Heart left ventricle (tissue), 16 donors: ENCODE measurements at regions of chr3 and their contacts with region 1.

Region 1: DNA sequence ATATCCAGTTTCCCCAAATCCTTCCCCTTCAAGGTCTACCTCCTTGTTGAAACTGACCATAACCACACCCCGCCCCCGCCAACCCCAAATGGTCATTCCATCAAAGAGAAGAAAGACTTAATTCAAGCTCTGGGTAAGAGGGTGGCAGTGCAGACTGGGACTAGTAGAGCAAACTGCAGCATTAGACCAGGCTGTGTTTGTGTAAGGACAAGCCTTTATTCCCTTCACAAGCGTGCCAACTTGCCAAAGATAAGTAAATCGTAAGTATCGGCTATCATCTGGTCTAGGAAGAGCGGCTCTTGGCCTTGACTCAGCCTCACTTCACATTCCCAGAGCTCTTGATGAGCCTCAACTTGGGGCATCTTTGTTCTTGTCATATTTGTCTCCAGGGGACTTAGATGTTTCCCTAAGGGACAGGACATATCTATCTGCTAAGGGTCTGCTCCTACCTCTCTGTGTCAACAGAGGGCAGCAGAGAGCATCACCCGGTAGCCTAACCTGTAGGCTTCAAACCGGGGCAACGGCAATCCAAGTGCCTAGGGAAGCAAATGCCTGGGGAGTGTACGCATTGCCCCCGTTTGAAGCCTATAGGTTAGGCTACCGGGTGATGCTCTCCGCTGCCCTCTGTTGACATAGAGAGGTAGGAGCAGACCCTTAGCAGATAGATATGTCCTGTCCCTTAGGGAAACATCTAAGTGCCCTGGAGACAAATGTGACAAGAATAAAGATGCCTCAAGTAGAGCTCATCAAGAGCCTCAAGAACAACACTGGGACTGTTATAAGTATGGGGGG is 8.9 kb upstream of the MAP3K13 start:
- DNase-seq: peak in 4 of 5 donors; percentile 32 to 55 (median 44)
- ATAC-seq: peak; percentile 42 to 90 (median 82)
- H3K4me3 ChIP-seq: no peak overlapping the region
- H3K27ac ChIP-seq: no peak overlapping the region
- H3K4me1 ChIP-seq: no peaks in the 10 kb centered on the region
- H3K27me3 ChIP-seq: no peaks in the 10 kb centered on the region
- CTCF ChIP-seq: peak; percentile 46 to 67 (median 56)
- POLR2A ChIP-seq: no peak

Region 2: DNA sequence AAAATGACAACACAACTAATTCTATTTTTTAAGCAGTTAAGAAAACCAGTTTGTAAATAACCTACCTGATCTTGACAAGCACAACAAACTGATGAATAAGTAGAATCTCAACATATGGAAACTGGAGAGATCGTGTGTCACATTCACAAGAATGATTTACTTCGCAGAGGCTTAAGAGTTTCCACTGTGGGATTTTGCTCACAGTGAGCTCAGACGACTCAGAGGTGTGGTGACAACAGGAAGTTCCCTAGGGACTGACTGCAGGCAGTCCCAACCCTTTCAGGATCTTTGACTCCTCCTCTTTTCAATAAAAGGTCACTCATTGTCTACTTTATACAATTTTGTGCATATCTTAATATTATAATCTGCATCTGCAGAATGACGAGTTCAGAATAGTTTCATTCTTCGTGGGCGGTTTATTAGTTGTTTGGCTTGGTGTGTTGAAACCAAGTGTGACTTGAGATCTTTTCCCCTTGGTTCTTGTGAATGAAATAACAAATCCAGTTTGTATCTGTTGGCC is 198.4 kb after region 1 on chr3 and contains the start of gene LIPH:
- intact Hi-C with region 1: loop called in 4 of 10 experiments (anchors 5 to 10 kb)
- DNase-seq: no peak
- ATAC-seq: no peak
- H3K4me3 ChIP-seq: peak within 1 kb of the TSS in 6 of 12 donors; percentile 11 to 37 (median 32)
- H3K27ac ChIP-seq: peak within 1 kb of the TSS in 1 of 12 donors; percentile 51
- H3K4me1 ChIP-seq: peaks cover 0 to 7% (median 0%) of the 10 kb centered on the region in 12 donors
- H3K27me3 ChIP-seq: no peaks in the 10 kb centered on the region
- CTCF ChIP-seq: no peak
- POLR2A ChIP-seq: no peak
- total RNA-seq, gene LIPH: 0.09 to 1.4 (median 0.48) TPM

Region 3: GRCh38 chr3:185558395-185558794 is 204.4 kb after region 1 on chr3:
- intact Hi-C with region 1: loop called in 4 of 10 experiments (anchors 5 to 10 kb)
- DNase-seq: no peak
- ATAC-seq: no peak
- H3K4me3 ChIP-seq: no peak overlapping the region
- H3K27ac ChIP-seq: no peak overlapping the region
- H3K4me1 ChIP-seq: peaks cover 0 to 19% (median 0%) of the 10 kb centered on the region in 12 donors
- H3K27me3 ChIP-seq: peaks cover 0 to 22% (median 0%) of the 10 kb centered on the region in 9 donors
- CTCF ChIP-seq: no peak
- POLR2A ChIP-seq: no peak

Region 4: DNA sequence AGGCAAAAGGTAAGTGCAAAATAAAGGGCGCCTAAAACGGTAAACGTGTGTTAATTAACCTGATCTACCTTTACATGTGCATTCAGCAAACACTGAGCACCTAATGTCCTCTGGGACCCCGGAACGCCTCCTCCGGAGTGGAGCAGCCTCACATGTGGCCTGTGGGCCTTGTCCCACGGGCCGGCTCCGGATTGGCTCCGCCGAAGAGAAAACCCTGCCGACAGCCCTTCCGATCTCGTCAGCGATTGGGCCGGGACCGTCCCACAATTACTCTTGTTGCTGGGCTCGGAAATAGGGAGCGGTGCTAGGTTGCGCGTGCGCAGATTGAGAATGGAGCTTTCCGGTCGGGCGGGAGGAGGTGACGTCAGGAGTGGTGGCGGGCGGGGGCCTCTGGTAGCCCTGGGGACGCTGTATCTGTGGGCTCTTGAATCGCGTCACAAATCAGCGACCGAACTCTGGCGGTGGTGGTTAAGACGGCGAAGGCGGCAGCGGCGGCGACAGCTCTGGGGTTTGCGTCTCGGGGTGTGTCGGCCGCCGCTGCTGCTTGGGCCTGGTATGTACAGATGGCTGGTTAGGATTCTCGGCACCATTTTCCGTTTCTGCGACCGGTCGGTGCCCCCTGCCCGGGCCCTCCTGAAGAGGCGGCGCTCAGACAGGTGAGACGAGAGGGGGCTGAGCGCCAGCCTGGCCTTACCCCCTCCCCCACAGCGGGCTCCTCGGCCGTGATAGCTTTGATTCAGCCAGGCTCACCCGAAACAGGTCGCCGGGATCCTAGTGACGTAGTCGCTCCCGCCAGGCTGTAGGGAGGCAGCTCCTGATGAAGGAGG is 232.1 kb after region 1 on chr3 and contains the start of gene SENP2:
- intact Hi-C with region 1: no loop called
- DNase-seq: peak; percentile 99
- ATAC-seq: peak; percentile 98 to 99 (median 98)
- H3K4me3 ChIP-seq: peak within 1 kb of the TSS; percentile 64 to 99 (median 84)
- H3K27ac ChIP-seq: peak within 1 kb of the TSS; percentile 82 to 99 (median 92)
- H3K4me1 ChIP-seq: peaks cover 0 to 38% (median 24%) of the 10 kb centered on the region in 12 donors
- H3K27me3 ChIP-seq: no peaks in the 10 kb centered on the region
- CTCF ChIP-seq: no peak
- POLR2A ChIP-seq: peak; percentile 20 to 78
- total RNA-seq, gene SENP2: 19.3 to 42.4 (median 33.1) TPM

Region 5: GRCh38 chr3:185929192-185930151 is 575.5 kb after region 1 on chr3:
- intact Hi-C with region 1: no loop called
- DNase-seq: no peak
- ATAC-seq: peak in 3 of 4 donors; percentile 32 to 39 (median 35)
- H3K4me3 ChIP-seq: peak overlapping the region in 6 of 12 donors; percentile 1 to 100 (median 11)
- H3K27ac ChIP-seq: peak overlapping the region in 3 of 12 donors; percentile 5 to 29 (median 5)
- H3K4me1 ChIP-seq: peaks cover 33 to 98% (median 94%) of the 10 kb centered on the region in 12 donors
- H3K27me3 ChIP-seq: no peaks in the 10 kb centered on the region
- CTCF ChIP-seq: no peak
- POLR2A ChIP-seq: no peak